ENCODE measurements at regions of chr17 and their contacts with region 1.

Region 1: DNA sequence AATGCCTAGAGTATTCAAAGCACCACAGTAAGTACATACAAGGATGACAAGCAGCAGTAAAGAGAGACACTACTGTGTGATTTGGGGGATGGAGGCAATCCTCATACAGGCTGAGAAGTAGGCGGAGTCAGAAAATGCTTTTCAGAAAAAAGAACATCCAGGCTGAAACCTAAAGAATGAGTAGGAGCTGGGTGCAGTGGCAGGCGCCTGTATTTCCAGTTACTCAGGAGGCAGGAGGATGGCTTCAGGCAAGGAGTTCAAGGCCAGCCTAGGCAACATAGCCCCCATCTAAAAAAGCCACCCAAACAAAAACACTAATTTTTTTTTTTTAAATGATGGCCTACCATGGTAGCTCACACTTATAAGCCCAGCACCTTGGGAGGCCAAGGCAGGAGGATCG is 10.3 kb downstream of the KANSL1 start:
- DNase-seq: no peak

Region 2: GRCh38 chr17:46128453-46128852 is 54.5 kb before region 1 on chr17:
- intact Hi-C with region 1: no loop called
- DNase-seq: no peak

Region 3: DNA sequence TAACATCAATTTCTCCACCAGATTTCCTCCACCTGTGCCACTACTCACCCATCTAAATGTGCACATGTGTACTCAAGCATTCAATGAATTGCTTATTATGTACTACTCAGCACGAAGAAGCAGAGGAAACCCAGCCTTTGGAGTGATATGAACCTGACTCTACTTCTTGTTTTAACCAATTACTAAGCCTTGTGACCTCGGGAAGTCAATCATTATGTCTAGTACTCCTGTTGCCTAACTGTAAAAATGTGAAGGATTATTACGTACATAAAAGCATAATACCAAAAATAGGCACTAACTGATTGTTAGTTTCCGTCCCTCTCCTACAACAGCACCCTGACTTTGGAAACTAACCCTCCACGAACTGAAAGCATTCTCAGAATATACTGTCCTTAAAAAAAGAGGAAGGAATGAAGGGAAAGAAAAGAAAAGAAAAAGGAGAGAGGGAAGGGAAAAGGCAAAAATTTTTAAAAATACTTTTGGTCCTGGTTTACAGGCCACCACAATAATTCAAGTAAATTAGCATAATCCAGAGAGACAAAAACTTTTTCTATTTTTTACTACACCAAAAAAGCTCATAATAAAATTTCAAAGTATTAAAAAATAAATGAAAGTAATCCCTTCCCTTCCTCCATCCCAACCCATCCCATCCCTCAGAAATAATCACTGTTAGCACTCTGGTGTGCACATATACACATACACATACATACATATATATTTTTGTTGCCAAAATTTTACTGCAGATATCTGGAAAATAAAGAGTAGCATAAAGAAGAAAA is 43.3 kb before region 1 on chr17:
- intact Hi-C with region 1: loop called in 1 of 2 experiments (anchors 5 kb)
- DNase-seq: no peak

Region 4: GRCh38 chr17:47145351-47145750 is 962.4 kb after region 1 on chr17:
- intact Hi-C with region 1: no loop called
- DNase-seq: no peak